ENCODE measurements at regions of chr5 and their contacts with region 1.

Region 1: DNA sequence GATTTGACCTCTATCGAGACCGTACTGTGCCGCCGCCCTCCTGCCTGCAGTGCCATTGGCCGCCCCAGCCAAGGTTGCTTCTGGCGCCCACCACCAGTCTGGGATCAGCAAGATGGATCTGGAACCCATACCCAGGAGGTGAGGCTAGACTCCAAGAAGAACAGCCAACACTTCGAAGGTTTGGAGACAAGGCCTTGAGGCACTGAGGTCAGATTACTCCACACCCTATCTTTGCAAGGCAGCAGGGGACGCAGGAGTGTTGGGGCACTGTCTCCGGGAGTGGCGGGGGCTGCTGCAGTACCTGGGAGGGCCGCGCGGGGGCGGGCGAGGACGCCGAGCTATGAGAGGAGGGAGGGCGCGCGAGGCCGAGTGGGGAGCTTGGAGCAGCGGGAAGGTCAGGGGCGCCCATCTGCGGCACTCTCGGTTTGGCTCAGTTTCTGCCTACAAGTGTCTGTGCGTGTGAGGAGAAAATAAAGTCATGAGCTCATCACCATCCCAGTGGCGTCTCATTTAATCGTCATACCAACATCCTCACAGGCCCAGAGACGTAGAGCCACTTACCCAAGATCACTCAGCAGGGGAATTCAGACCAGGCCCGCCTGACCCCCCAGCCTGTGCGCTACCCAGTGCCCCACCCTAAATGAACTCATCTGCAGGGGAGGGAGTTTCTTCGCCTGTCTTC is 20.5 kb upstream of the PSD2 start:
- DNase-seq: peak; percentile 63 to 83
- ATAC-seq: peak; percentile 90 to 98
- H3K4me3 ChIP-seq: no peak overlapping the region
- H3K27ac ChIP-seq: no peak overlapping the region
- H3K4me1 ChIP-seq: no peaks in the 10 kb centered on the region
- CTCF ChIP-seq: peak; percentile 71
- EP300 ChIP-seq: no peak
- POLR2A ChIP-seq: no peak
- RAD21 ChIP-seq: peak; percentile 44 to 45; a peak in 3 of 5 replicates

Region 2: GRCh38 chr5:139711067-139711905 is 63.8 kb before region 1 on chr5:
- CTCF ChIA-PET with region 1: no interaction called
- POLR2A ChIA-PET with region 1: no interaction called
- DNase-seq: peak; percentile 31 to 46
- ATAC-seq: peak; percentile 37 to 65; a peak in 5 of 6 replicates
- H3K4me3 ChIP-seq: peak overlapping the region; percentile 88
- H3K27ac ChIP-seq: peak overlapping the region; percentile 65 to 87
- H3K4me1 ChIP-seq: peaks cover 19% of the 10 kb centered on the region; the same call in 2 of the 3 replicates
- CTCF ChIP-seq: no peak
- EP300 ChIP-seq: no peak
- POLR2A ChIP-seq: no peak
- RAD21 ChIP-seq: peak; percentile 24 to 39; a peak in 2 of 5 replicates

Region 3: DNA sequence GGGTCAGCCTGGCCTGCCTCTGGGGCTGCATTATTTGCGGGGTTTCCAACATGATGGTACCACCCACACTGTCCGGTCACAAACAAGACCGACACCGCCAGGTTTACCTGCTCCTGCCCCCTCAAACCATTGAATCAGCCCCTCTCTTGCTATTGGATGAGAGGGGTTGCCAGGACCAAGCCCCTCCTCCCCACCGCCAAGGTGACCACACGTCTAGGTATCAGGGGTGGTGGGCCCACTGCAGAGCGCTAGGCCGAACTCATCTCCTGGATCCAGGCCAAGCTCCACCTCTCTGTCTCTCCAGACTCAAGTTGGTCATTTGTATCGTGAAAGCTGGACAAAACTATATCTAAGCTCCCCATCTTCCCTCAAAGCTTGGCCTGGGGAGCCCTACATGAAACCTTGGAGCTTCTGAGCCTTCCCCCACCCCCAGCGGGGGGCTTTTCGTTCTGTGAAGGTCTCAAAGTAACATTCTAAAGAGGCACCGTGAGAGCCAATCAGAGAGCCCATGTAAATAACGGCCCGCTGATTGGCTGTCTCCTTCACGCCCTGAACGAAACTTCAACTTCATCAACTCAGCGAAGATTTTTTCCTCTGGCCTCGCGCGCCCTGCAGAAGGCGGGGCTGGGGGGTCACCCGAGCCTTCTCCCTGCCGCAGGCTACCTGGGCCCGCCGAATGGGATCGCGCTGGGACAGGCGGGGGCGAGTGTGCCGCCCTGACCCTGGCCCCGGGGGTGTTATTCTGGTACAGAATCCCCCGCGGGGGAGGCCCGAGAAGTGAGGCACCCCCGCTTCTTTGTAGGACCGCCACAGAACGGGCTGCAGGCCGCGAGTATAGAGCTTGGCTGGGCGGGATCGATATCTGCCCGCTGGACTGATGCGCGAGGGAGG is 29.1 kb before region 1 on chr5:
- CTCF ChIA-PET with region 1: interaction called, 10 read pairs
- POLR2A ChIA-PET with region 1: no interaction called
- DNase-seq: peak; percentile 77 to 85
- ATAC-seq: peak; percentile 48 to 83
- H3K4me3 ChIP-seq: peak overlapping the region; percentile 40
- H3K27ac ChIP-seq: peak overlapping the region; percentile 75 to 89
- H3K4me1 ChIP-seq: peaks cover 44% of the 10 kb centered on the region
- CTCF ChIP-seq: no peak
- EP300 ChIP-seq: no peak
- POLR2A ChIP-seq: no peak
- RAD21 ChIP-seq: no peak

Region 4: GRCh38 chr5:139795074-139796001 is 20.2 kb after region 1 on chr5 and contains the start of gene PSD2:
- CTCF ChIA-PET with region 1: interaction called, 15 read pairs
- POLR2A ChIA-PET with region 1: no interaction called
- DNase-seq: no peak
- ATAC-seq: peak; percentile 7 to 15; a peak in 2 of 6 replicates
- H3K4me3 ChIP-seq: peak within 1 kb of the TSS; percentile 56
- H3K27ac ChIP-seq: peak within 1 kb of the TSS; percentile 34 to 79; a peak in 4 of 6 replicates
- H3K4me1 ChIP-seq: 0 out of 3 replicates have a peak, but pooled peaks cover 5% of the 10 kb centered on the region
- CTCF ChIP-seq: no peak
- EP300 ChIP-seq: no peak
- POLR2A ChIP-seq: no peak
- RAD21 ChIP-seq: no peak
- polyA plus RNA-seq, gene PSD2: 0.03 TPM in 1 of 2 replicates, not detected in the other

Region 5: GRCh38 chr5:139863855-139864558 is 88.9 kb after region 1 on chr5:
- CTCF ChIA-PET with region 1: interaction called, 14 read pairs
- POLR2A ChIA-PET with region 1: no interaction called
- DNase-seq: peak; percentile 49 to 80
- ATAC-seq: peak; percentile 67 to 90
- H3K4me3 ChIP-seq: no peak overlapping the region
- H3K27ac ChIP-seq: no peak overlapping the region
- H3K4me1 ChIP-seq: 0 out of 3 replicates have a peak, but pooled peaks cover 3% of the 10 kb centered on the region
- CTCF ChIP-seq: peak; percentile 68
- EP300 ChIP-seq: no peak
- POLR2A ChIP-seq: no peak
- RAD21 ChIP-seq: peak; percentile 66 to 72

Measured in A549 (cell line).